Mammary epithelial cell (primary cell): ENCODE measurements at regions of chr13 and their contacts with region 1.

Region 1: GRCh38 chr13:44969551-44970484 is 19.5 kb downstream of the NUFIP1 start:
- DNase-seq: peak; percentile 28
- H3K4me3 ChIP-seq: no peak overlapping the region
- H3K27ac ChIP-seq: no peak overlapping the region
- H3K4me1 ChIP-seq: peaks cover 3% of the 10 kb centered on the region
- H3K27me3 ChIP-seq: no peaks in the 10 kb centered on the region
- CTCF ChIP-seq: peak; percentile 68 to 72

Region 2: DNA sequence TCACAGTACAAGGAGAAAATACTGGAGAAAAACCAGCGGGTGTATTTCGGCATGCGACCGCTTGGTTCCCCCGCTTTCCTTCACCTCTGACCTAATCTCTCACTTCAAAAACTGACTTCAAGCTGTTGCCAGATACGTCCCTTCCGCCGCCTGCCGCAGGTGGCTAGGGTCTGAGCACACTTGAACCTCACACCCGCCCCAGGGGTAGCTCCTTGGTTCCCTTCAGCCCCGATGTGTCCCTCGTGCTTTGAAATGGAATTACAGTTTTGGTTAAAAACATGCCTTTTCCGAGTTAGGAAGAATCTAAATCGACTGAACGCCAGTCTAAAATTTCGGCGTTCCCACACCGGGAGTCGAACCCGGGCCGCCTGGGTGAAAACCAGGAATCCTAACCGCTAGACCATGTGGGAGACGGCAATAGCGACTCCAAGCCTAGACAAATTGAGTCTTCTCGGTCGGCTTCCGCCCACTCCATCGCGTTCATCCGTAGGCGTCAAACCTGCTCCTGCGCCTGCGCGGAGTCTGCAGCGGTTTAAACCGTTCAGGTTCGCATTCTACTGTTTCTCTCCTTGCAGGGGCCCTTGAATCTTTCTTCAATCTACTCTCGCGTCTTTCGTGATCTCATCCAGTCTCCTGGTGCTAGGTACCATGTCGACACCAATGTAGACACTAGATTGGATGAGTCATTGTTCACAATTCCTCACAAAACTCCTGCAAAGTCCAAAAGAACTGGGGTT is 52.1 kb before region 1 on chr13:
- CTCF ChIA-PET with region 1: no interaction called
- dilution Hi-C with region 1: no loop called
- in situ Hi-C with region 1: no loop called
- intact Hi-C with region 1: loop called (anchors 1 kb)
- DNase-seq: peak; percentile 95
- H3K4me3 ChIP-seq: peak overlapping the region; percentile 54 to 58 (median 56)
- H3K27ac ChIP-seq: peak overlapping the region; percentile 84
- H3K4me1 ChIP-seq: peaks cover 26% of the 10 kb centered on the region
- H3K27me3 ChIP-seq: no peaks in the 10 kb centered on the region
- CTCF ChIP-seq: peak in 1 of 2 donors; percentile 40

Region 3: GRCh38 chr13:45511310-45512097 is 541.7 kb after region 1 on chr13:
- CTCF ChIA-PET with region 1: no interaction called
- dilution Hi-C with region 1: no loop called
- in situ Hi-C with region 1: no loop called
- intact Hi-C with region 1: no loop called
- DNase-seq: peak; percentile 69
- H3K4me3 ChIP-seq: no peak overlapping the region
- H3K27ac ChIP-seq: peak overlapping the region; percentile 90
- H3K4me1 ChIP-seq: peaks cover 13% of the 10 kb centered on the region
- H3K27me3 ChIP-seq: no peaks in the 10 kb centered on the region
- CTCF ChIP-seq: peak; percentile 75 to 85